Dorsolateral prefrontal cortex (tissue), 120 donors: ENCODE measurements at regions of chr5 and their contacts with region 1.

Region 1: GRCh38 chr5:137498736-137499505 is at the start of gene SPOCK1:
- DNase-seq: peak; percentile 62 to 86 (median 72)
- H3K4me3 ChIP-seq: peak within 1 kb of the TSS; percentile 45 to 95 (median 82)
- H3K27ac ChIP-seq: peak within 1 kb of the TSS in 57 of 59 donors; percentile 48 to 96 (median 89)
- H3K27me3 ChIP-seq: no peaks in the 10 kb centered on the region
- CTCF ChIP-seq: peak; percentile 34 to 92 (median 72)
- total RNA-seq, gene SPOCK1: 164 to 817 (median 487) TPM

Region 2: GRCh38 chr5:136802383-136802782 is 696.5 kb before region 1 on chr5:
- intact Hi-C with region 1: loop called (anchors 5 kb)
- DNase-seq: peak in 4 of 10 donors; percentile 17 to 49 (median 42)
- H3K4me3 ChIP-seq: no peak overlapping the region
- H3K27ac ChIP-seq: no peak overlapping the region
- H3K27me3 ChIP-seq: no peaks in the 10 kb centered on the region
- CTCF ChIP-seq: peak; percentile 15 to 73 (median 56)

Region 3: DNA sequence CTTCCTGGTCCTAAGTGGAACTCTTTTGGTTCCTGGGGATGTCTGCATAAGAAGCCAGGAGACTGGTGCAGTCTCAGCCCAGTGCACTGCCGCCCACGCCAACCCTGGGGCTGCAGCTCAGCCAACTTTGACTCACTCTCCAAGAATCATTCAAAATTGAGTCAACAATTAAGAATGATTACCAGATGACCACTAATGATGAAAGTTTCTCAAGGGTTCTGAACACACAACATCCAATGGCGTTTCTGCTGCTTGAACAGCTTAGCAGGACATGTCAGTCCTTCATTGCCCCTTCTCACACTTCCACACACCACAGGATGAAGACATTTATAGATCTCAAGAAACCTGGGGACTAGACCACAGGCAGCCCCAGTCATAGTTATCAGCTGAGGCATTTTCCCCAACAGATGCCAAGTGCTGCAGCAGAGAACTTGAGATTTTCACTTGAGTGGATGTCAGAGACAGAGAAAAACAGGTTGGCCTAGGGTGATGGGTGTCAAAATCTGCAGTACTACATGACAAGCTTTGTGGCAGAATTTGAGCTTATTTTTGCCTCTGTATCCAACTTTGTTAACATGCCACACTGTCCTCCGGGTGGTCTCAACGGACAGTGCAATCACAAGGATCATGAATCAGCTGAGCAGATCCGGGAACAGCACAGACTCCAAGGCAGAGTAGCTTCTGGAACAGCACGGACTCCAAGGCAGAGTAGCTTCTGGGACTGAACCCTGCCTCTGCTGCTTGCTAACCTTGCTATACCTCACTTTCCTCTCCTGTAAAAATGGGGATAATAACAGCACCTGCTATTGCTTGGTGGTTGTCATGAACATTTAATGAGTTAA is 355.9 kb before region 1 on chr5:
- intact Hi-C with region 1: loop called in 1 of 2 experiments (anchors 10 kb)
- DNase-seq: peak in 5 of 10 donors; percentile 23 to 55 (median 42)
- H3K4me3 ChIP-seq: no peak overlapping the region
- H3K27ac ChIP-seq: peak overlapping the region in 4 of 59 donors; percentile 2 to 29 (median 12)
- H3K27me3 ChIP-seq: no peaks in the 10 kb centered on the region
- CTCF ChIP-seq: no peak

Region 4: DNA sequence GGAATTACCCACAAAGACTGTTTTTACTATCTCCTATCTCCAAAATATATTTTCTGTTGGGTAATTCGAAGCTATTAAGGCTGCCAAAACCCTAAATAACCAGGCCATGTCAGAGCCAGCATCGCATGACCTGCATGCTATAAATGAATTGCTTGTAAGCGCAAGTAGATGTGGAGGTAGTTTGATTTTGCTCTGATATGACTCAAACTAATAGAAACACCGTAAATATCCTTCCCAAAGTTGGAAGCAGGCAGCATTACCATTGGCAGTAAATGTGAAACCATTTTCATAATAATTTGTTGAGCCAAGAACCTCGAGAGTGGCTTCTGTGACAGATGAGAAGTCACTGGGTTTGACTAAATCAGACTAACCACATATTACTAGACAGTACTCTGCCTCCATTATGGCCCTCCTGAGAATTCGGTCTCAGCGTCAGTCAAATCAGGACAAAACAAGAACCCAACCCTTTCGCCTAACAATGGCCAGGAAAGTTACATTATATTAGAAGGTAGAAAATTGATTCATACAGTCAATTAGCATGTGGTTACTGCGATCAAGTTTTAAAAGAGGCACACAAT is 289.6 kb before region 1 on chr5:
- intact Hi-C with region 1: no loop called
- DNase-seq: no peak
- H3K4me3 ChIP-seq: no peak overlapping the region
- H3K27ac ChIP-seq: peak overlapping the region in 8 of 59 donors; percentile 11 to 39 (median 22)
- H3K27me3 ChIP-seq: no peaks in the 10 kb centered on the region
- CTCF ChIP-seq: no peak

Region 5: GRCh38 chr5:137320056-137321045 is 178.6 kb before region 1 on chr5:
- intact Hi-C with region 1: loop called (anchors 1 to 2 kb)
- DNase-seq: peak in 1 of 10 donors; percentile 51
- H3K4me3 ChIP-seq: peak overlapping the region in 1 of 59 donors; percentile 7
- H3K27ac ChIP-seq: peak overlapping the region in 17 of 59 donors; percentile 5 to 81 (median 51)
- H3K27me3 ChIP-seq: no peaks in the 10 kb centered on the region
- CTCF ChIP-seq: peak; percentile 65 to 92 (median 84)

Region 6: DNA sequence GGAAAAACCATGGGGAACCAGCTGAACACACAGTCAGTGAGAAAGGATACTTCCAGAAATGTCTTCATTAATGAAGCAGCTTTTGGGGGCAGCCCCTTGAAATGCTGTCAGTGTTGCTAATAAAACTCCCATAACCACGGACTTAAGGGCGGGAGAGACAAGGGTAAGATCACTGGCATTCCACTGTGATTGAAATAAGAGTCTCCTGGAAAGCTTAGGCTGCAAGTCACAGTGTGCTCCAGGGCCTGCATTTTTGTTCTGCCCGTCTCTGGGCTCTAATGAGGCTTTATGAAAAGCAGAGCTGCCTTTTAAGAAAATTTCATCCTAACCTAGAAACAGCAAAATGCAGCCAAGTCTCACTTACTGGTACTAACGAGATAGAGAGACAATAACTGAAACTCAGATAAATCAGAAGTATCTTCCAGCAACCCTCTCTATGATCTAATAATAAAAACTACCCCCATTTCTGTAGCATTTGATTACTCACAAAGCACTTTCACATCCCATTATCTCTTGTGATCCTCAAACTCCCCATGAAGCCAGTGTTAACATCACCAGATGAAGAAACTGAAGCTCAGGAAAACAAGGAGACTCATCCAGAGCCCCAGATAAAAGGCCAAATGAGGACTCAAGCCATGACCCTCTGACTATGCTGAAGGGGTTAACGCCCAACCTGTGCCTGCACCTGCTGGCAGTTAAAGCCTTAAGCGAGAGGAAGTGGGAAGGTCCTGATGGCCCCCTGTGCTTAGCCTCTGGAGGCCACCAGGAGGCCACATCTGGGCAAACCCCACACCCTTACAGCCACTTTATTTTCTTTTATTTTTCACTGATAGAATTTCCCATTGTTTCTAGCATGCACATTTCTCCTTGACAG is 37.3 kb before region 1 on chr5:
- intact Hi-C with region 1: loop called (anchors 2 to 5 kb)
- DNase-seq: no peak
- H3K4me3 ChIP-seq: peak overlapping the region in 24 of 59 donors; percentile 0 to 45 (median 24)
- H3K27ac ChIP-seq: peak overlapping the region; percentile 53 to 100 (median 96)
- H3K27me3 ChIP-seq: no peaks in the 10 kb centered on the region
- CTCF ChIP-seq: peak in 31 of 56 donors; percentile 8 to 58 (median 36)

Region 7: DNA sequence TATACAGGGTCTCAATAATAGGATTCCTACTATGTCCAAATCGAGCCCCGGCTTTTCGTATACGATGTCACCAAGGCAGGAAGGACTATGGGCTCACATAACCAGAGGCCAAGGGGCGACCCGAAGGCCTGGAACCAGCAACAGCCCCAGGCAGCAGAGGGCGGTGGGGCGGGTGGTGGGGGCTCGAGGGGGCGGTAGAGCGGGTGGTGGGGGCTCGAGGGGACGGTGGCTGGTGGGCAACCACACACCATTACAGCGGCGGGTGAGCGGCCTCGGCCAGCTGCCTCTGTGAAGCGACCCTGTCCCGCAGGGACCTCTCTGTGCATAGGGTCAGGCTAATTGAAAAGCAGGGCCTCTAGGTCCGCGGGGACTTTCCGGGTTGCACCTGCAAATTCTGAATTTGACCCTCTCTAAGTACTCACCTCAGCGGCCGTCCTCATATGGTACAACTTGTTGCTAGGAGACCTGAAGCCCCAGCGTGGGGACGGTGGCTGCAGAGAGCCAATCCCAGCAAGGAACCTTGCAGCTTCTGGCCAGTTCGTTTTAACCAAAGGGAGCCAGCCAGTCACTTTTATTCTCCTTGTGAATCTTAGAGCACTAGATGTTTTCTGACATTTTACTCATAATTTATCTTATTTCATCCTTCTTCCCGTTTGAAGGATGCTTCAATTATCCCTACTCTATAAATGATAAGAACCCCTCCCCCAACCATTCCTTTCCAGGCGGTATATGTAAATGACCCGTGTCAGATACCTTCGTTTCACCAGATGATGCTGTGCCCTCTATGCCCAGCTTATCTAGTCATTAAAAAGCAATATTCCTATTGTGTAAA is 640.2 kb after region 1 on chr5 and contains the start of gene NME5:
- intact Hi-C with region 1: no loop called
- DNase-seq: peak; percentile 57 to 90 (median 84)
- H3K4me3 ChIP-seq: peak within 1 kb of the TSS; percentile 47 to 88 (median 75)
- H3K27ac ChIP-seq: peak within 1 kb of the TSS in 26 of 59 donors; percentile 3 to 73 (median 46)
- H3K27me3 ChIP-seq: no peaks in the 10 kb centered on the region
- CTCF ChIP-seq: peak in 2 of 56 donors; percentile 13 to 15
- total RNA-seq, gene NME5: 12.9 to 48.5 (median 31.0) TPM